Gastrocnemius medialis (tissue), 4 donors: ENCODE measurements at regions of chrX and their contacts with region 1.

Region 1: DNA sequence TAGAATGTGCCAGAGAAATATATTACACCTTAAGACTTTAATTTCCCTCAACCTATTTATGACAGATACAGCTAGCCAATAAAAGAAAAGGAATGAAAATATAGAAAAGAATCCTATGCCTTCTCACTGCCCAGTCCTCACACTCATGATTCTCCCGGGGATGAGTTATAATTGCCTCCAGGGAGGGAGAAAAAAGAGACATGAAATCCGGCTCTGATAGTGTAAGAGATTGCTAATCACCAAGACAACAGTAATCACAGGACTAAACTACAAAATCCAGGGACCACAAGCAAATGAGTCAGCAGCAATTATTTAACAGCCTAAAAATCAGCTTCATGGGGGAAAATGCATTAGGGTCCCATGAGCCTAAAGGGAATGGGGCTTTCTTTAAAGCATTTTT is 95.9 kb upstream of the DUSP21 start:
- DNase-seq: no peak
- ATAC-seq: no peak
- H3K4me3 ChIP-seq: no peak overlapping the region
- H3K27ac ChIP-seq: no peak overlapping the region
- H3K4me1 ChIP-seq: no peaks in the 10 kb centered on the region
- H3K27me3 ChIP-seq: peaks cover 0 to 3% (median 0%) of the 10 kb centered on the region in 3 donors
- CTCF ChIP-seq: no peak
- POLR2A ChIP-seq: no peak

Region 2: DNA sequence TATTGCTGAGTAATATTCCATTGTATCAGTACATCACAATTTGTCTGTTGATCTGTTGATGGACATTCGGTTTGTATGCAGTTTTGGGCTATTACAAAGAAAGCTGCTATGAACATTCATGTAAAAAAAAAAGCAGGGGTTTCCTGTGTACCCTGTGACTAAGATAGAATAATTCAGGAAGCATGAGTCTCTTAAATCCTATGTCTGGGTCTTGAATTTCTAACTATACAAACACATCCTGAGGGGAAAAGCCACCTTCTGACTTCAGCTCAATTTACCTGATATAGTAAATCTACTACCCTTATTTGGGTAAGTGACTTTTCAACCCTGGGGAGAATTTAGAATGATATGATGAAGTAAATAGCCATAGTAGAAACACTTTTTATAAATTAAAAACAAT is 110.7 kb before region 1 on chrX:
- in situ Hi-C with region 1: loop called in 1 of 4 experiments (anchors 25 kb)
- intact Hi-C with region 1: no loop called
- DNase-seq: no peak
- ATAC-seq: no peak
- H3K4me3 ChIP-seq: no peak overlapping the region
- H3K27ac ChIP-seq: no peak overlapping the region
- H3K4me1 ChIP-seq: no peaks in the 10 kb centered on the region
- H3K27me3 ChIP-seq: no peaks in the 10 kb centered on the region
- CTCF ChIP-seq: no peak
- POLR2A ChIP-seq: no peak